ENCODE measurements at regions of chr10 and their contacts with region 1.

Region 1: GRCh38 chr10:100038561-100039071 is 28.9 kb upstream of the DNMBP start:
- DNase-seq: no peak
- ATAC-seq: peak; percentile 50
- H3K4me3 ChIP-seq: no peak overlapping the region
- H3K27ac ChIP-seq: peak overlapping the region; percentile 24; the same call in 1 of the 2 replicates
- H3K4me1 ChIP-seq: peaks cover 40% of the 10 kb centered on the region
- H3K27me3 ChIP-seq: no peaks in the 10 kb centered on the region
- CTCF ChIP-seq: no peak
- EP300 ChIP-seq: no peak
- POLR2A ChIP-seq: no peak
- RAD21 ChIP-seq: no peak

Region 2: GRCh38 chr10:100020142-100020885 is 18.3 kb before region 1 on chr10:
- CTCF ChIA-PET with region 1: interaction called, 6 read pairs
- POLR2A ChIA-PET with region 1: interaction called, 5 read pairs
- RAD21 ChIA-PET with region 1: interaction called, 13 read pairs
- SMC1A ChIA-PET with region 1: interaction called, 14 read pairs
- in situ Hi-C with region 1: no loop called
- intact Hi-C with region 1: no loop called
- DNase-seq: peak; percentile 87
- ATAC-seq: peak; percentile 92
- H3K4me3 ChIP-seq: peak overlapping the region; percentile 41; the same call in 1 of the 2 replicates
- H3K27ac ChIP-seq: peak overlapping the region; percentile 94
- H3K4me1 ChIP-seq: peaks cover 29% of the 10 kb centered on the region
- H3K27me3 ChIP-seq: no peaks in the 10 kb centered on the region
- CTCF ChIP-seq: peak in 2 of 3 experiments; percentile 28 to 44; a peak in 3 of 6 replicates
- EP300 ChIP-seq: peak in 1 of 2 experiments; percentile 31; a peak in 1 of 4 replicates
- POLR2A ChIP-seq: no peak
- RAD21 ChIP-seq: peak; percentile 56